K562 (cell line): ENCODE measurements at regions of chr20 and their contacts with region 1.

Region 1: GRCh38 chr20:49768204-49769047 is 44.2 kb upstream of the SLC9A8 start:
- DNase-seq: no peak
- ATAC-seq: no peak
- H3K4me3 ChIP-seq: no peak overlapping the region
- H3K27ac ChIP-seq: 0 out of 3 replicates have a peak overlapping the region, but pooled peaks have one; percentile 27
- H3K4me1 ChIP-seq: peaks cover 22 to 51% of the 10 kb centered on the region in 2 experiments
- H3K27me3 ChIP-seq: no peaks in the 10 kb centered on the region
- CTCF ChIP-seq: no peak
- EP300 ChIP-seq: no peak
- POLR2A ChIP-seq: no peak
- RAD21 ChIP-seq: no peak

Region 2: DNA sequence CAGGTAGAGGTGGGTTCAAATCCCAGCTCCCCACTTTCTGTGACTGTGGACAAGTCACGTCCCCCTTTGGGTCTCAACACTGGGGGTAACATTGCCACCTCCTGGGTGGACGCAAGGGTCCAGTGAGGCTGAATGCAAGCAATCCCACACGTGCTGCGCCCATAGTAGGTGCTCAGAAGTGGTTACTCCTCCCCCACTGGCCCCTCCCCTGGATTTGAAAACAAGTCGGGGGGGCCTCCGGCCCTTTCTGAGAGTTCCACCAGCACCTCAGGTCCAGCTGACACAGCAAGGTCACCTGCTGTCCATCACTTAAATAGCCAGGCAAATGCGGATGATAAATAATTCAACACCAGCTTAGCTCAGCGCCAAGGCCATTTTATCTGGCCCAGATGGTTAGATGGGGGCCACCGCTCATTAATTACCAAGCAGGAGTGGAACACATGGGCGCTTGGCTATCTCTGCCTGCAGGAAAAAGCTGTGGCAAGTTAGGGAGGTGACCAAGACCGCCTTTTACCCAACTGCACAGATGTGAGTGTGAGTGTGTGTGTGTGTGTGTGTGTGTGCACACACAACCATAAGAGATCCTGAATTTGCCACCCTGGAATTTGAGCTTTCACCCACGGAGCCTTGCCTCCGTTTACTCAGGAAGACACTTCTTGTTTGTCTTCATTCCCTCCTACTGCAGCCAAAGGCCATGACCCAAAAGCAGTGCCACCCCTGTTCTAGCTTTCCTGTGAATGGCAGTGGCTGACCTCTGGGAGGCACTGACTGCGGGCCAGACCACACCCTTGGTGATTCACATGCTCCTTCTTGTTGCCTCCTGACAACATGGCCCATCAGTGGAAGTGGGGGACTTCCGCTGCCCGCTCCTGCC is 251.3 kb before region 1 on chr20:
- CTCF ChIA-PET with region 1: no interaction called
- POLR2A ChIA-PET with region 1: no interaction called
- in situ Hi-C with region 1: no loop called
- intact Hi-C with region 1: no loop called
- DNase-seq: no peak
- ATAC-seq: no peak
- H3K4me3 ChIP-seq: no peak overlapping the region
- H3K27ac ChIP-seq: no peak overlapping the region
- H3K4me1 ChIP-seq: no peaks in the 10 kb centered on the region
- H3K27me3 ChIP-seq: peaks cover 3 to 32% of the 10 kb centered on the region in 2 experiments; a peak in 2 of 5 replicates
- CTCF ChIP-seq: no peak
- EP300 ChIP-seq: no peak
- POLR2A ChIP-seq: no peak
- RAD21 ChIP-seq: no peak

Region 3: DNA sequence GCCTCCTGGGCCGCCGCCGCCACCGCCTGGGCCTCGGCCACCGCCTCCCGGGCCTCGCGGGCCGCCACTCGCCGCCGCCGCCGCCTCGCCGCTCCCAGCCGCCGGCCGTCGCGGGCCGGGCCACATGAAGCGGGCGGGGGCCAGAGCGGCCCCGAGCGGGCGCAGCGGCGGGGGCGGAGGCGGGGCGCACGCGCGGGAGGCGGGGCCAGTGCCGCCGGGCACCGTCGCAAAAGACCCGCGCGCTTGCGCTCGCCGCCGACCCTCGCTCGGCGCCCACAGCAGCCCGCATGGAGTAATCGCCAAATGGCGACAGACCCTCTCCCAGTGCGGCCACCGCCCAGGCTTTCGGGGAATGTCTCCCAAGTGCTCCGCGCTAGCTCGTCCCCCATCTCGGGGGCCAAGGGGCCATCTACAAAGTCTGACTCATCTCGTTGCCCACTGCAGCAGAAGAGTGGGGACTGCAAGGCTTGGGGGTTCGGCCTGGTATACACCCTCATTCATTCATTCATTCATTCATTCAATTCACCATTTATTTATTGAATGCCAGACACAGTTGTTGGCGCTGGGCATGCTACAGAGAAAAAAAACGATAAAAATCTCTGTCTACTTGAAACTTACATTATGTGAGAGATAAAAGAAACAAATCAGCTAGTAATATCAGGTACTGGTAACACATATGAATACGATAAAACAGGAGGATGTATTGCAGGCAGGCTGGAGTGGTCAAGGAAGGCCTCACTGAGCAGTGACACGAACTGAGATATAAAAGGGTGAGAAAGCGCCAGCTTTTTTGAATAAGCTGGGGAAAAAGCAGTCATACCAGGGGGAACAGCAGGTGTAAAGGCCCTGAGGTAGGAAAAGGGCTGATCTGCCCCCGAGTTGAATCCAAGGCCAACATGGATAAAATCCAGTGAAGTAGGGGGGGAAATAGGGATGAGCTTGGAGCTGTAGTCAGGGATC is 54.4 kb before region 1 on chr20 and contains the start of gene B4GALT5:
- CTCF ChIA-PET with region 1: no interaction called
- POLR2A ChIA-PET with region 1: interaction called, 6 read pairs
- in situ Hi-C with region 1: no loop called
- intact Hi-C with region 1: loop called (anchors 5 kb)
- DNase-seq: peak; percentile 87 to 94 (median 90)
- ATAC-seq: peak; percentile 86
- H3K4me3 ChIP-seq: peak within 1 kb of the TSS; percentile 78
- H3K27ac ChIP-seq: peak within 1 kb of the TSS; percentile 86
- H3K4me1 ChIP-seq: peaks cover 18 to 21% of the 10 kb centered on the region in 2 experiments; a peak in 3 of 5 replicates
- H3K27me3 ChIP-seq: no peaks in the 10 kb centered on the region
- CTCF ChIP-seq: no peak
- EP300 ChIP-seq: 0 out of 2 replicates have a peak, but pooled peaks have one; percentile 6
- POLR2A ChIP-seq: 0 out of 2 replicates have a peak, but pooled peaks have one; percentile 28
- RAD21 ChIP-seq: no peak
- polyA plus RNA-seq, gene B4GALT5: 12.2 to 17.5 TPM

Region 4: GRCh38 chr20:49724408-49725223 is 43.8 kb before region 1 on chr20:
- CTCF ChIA-PET with region 1: no interaction called
- POLR2A ChIA-PET with region 1: no interaction called
- in situ Hi-C with region 1: no loop called
- intact Hi-C with region 1: no loop called
- DNase-seq: peak; percentile 31 to 60 (median 49)
- ATAC-seq: peak; percentile 85
- H3K4me3 ChIP-seq: no peak overlapping the region
- H3K27ac ChIP-seq: no peak overlapping the region
- H3K4me1 ChIP-seq: peaks cover 0 to 7% of the 10 kb centered on the region in 2 experiments; a peak in 3 of 5 replicates
- H3K27me3 ChIP-seq: no peaks in the 10 kb centered on the region
- CTCF ChIP-seq: no peak
- EP300 ChIP-seq: no peak
- POLR2A ChIP-seq: no peak
- RAD21 ChIP-seq: no peak

Region 5: GRCh38 chr20:49790077-49790798 is 21.8 kb after region 1 on chr20:
- CTCF ChIA-PET with region 1: no interaction called
- POLR2A ChIA-PET with region 1: interaction called, 7 read pairs
- in situ Hi-C with region 1: no loop called
- intact Hi-C with region 1: loop called (anchors 2 kb)
- DNase-seq: peak; percentile 88 to 95 (median 89)
- ATAC-seq: peak; percentile 82
- H3K4me3 ChIP-seq: 0 out of 2 replicates have a peak overlapping the region, but pooled peaks have one; percentile 1
- H3K27ac ChIP-seq: peak overlapping the region; percentile 87
- H3K4me1 ChIP-seq: peaks cover 35 to 57% of the 10 kb centered on the region in 2 experiments
- H3K27me3 ChIP-seq: no peaks in the 10 kb centered on the region
- CTCF ChIP-seq: peak in 2 of 3 experiments; percentile 26 to 49; a peak in 2 of 6 replicates
- EP300 ChIP-seq: peak; percentile 96
- POLR2A ChIP-seq: no peak
- RAD21 ChIP-seq: peak; percentile 35 to 65

Region 6: DNA sequence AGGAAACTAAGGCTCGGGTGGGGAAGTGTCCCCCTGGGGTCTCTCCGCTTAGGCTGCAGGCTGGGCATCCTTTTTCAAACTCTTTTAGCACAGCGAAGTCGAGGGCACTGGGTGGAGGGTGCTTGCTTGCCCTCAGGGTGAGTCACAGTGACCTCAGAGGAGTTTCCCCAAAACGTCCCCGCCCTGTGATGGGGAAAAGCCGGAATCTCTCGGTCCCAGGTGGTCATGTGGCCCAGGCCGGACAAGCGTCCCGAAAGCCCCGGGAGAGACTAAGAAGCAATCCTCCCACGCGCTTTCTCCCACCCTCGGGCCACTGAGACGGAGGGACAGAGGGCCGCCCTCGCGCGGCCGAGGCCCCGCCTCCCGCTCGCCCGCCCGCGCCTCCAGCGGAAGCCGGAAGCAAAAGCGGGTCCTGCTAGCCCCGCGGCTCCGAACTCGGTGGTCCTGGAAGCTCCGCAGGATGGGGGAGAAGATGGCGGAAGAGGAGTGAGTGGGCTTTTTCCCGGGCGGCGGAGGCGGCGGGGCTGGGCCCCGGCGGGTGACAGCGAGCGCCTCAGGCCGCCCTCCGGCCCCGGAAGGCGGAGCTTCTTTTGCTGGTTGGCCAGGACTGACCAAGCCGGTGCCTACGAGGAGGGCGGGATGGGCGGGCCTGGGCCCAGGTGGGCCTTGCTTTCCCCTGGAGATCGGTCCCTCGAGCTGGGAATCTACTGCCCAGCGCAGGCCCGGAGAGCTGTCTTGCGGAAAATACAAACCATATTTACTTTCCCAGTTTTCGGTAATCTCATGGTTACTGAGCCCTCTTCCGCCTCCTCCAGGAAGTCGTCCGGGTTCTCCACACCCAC is 44.3 kb after region 1 on chr20 and contains the start of gene SLC9A8:
- CTCF ChIA-PET with region 1: no interaction called
- POLR2A ChIA-PET with region 1: no interaction called
- in situ Hi-C with region 1: no loop called
- intact Hi-C with region 1: loop called (anchors 5 kb)
- DNase-seq: peak; percentile 91 to 96 (median 94)
- ATAC-seq: peak; percentile 98
- H3K4me3 ChIP-seq: peak within 1 kb of the TSS; percentile 65
- H3K27ac ChIP-seq: peak within 1 kb of the TSS; percentile 91
- H3K4me1 ChIP-seq: peaks cover 13 to 23% of the 10 kb centered on the region in 2 experiments; a peak in 4 of 5 replicates
- H3K27me3 ChIP-seq: no peaks in the 10 kb centered on the region
- CTCF ChIP-seq: peak; percentile 38 to 53 (median 43); a peak in 5 of 6 replicates
- EP300 ChIP-seq: peak; percentile 53; the same call in 1 of the 2 replicates
- POLR2A ChIP-seq: peak; percentile 77
- RAD21 ChIP-seq: peak; percentile 8 to 25; a peak in 3 of 4 replicates
- polyA plus RNA-seq, gene SLC9A8: 0.56 to 0.76 TPM